HCT116 (cell line): ENCODE measurements at regions of chr12 and their contacts with region 1.

Region 1: DNA sequence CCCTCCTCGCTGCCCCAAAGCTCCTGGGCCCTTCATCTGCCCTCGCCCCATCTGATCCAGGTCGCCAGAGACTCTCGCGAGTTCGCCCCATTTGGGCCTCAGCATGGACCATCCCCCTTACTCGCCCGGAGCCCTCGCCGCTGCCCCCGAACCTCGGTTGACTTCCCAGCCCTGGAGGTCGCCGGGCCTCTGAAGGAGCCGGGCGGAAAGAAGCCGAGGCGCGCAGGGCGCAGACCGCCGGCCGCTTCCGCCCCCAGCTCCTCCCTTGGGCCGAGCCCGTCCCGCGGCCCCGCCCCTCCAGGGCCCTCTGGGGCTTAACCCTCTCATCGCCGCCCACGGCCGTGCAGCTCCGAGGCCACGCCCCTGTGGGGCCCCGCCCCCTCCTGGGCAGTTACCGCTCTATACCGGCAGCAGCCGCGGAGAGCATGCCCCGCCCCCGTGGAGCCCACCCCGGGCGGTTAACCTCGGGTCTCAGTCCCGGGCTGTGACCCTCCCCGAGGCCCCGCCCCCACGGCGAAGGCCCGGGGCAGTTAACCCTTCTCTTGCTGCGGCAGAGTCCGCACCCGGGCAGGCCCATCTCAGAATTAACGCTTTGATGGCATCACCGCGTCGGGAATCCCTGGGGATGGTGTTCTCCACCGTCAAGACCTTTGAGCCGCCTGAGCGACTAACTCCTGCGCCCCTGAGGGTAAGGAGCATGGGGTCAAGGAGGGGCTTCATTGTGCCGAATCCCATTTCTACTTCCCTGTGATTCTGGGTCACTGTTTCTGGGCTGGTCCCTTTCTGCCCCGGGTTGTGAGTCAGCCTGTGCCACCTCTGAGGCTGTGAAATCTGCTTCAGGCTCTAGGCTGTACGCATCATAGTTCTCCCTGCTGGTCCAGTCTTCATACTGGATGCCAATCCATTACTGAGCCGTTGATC is at the start of gene SPSB2:
- DNase-seq: peak; percentile 89
- ATAC-seq: peak; percentile 79
- H3K4me3 ChIP-seq: peak within 1 kb of the TSS; percentile 73 to 92
- H3K27ac ChIP-seq: peak within 1 kb of the TSS; percentile 96
- H3K4me1 ChIP-seq: peaks cover 23 to 50% of the 10 kb centered on the region in 2 experiments
- H3K27me3 ChIP-seq: no peaks in the 10 kb centered on the region
- CTCF ChIP-seq: no peak
- POLR2A ChIP-seq: peak; percentile 35
- RAD21 ChIP-seq: no peak
- total RNA-seq, gene SPSB2: 10.0 TPM

Region 2: GRCh38 chr12:6768990-6769389 is 104.4 kb before region 1 on chr12:
- CTCF ChIA-PET with region 1: no interaction called
- POLR2A ChIA-PET with region 1: no interaction called
- RAD21 ChIA-PET with region 1: no interaction called
- intact Hi-C with region 1: no loop called
- DNase-seq: no peak
- ATAC-seq: no peak
- H3K4me3 ChIP-seq: 0 out of 4 replicates have a peak overlapping the region, but pooled peaks of 1 of the 2 experiments have one; percentile 85
- H3K27ac ChIP-seq: peak overlapping the region; percentile 72; the same call in 1 of the 2 replicates
- H3K4me1 ChIP-seq: peaks cover 32 to 61% of the 10 kb centered on the region in 2 experiments
- H3K27me3 ChIP-seq: no peaks in the 10 kb centered on the region
- CTCF ChIP-seq: no peak
- POLR2A ChIP-seq: no peak
- RAD21 ChIP-seq: no peak

Region 3: DNA sequence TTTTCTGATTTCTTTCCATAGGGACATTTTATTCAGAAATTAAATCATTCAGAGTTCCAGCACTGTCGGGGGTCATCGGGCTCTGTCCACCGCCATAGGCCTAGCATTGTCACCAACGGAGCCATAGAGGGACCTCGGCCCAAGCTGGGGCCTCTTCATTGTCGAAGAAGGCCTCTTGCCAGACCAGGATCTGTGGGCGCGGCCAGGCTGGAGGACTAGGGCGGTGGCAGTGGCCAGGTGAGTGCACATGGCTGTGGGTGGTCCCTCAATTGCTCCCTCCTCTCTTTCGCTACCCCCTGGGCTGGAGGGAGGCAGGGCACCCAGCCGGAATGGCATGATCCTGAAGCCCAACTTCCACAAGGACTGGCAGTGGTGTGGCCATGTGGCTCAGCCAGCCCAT is 10.3 kb after region 1 on chr12:
- CTCF ChIA-PET with region 1: interaction called, 16 read pairs
- POLR2A ChIA-PET with region 1: interaction called, 11 read pairs
- RAD21 ChIA-PET with region 1: no interaction called
- intact Hi-C with region 1: no loop called
- DNase-seq: no peak
- ATAC-seq: no peak
- H3K4me3 ChIP-seq: no peak overlapping the region
- H3K27ac ChIP-seq: no peak overlapping the region
- H3K4me1 ChIP-seq: peaks cover 12 to 22% of the 10 kb centered on the region in 2 experiments
- H3K27me3 ChIP-seq: no peaks in the 10 kb centered on the region
- CTCF ChIP-seq: no peak
- POLR2A ChIP-seq: no peak
- RAD21 ChIP-seq: no peak

Region 4: GRCh38 chr12:6890789-6891645 is 17.7 kb after region 1 on chr12:
- CTCF ChIA-PET with region 1: interaction called, 30 read pairs
- POLR2A ChIA-PET with region 1: interaction called, 10 read pairs
- RAD21 ChIA-PET with region 1: interaction called, 3 to 4 read pairs
- intact Hi-C with region 1: loop called (anchors 1 kb)
- DNase-seq: peak; percentile 86
- ATAC-seq: peak; percentile 97
- H3K4me3 ChIP-seq: peak overlapping the region; percentile 34 to 52
- H3K27ac ChIP-seq: peak overlapping the region; percentile 87
- H3K4me1 ChIP-seq: peaks cover 12 to 18% of the 10 kb centered on the region in 2 experiments
- H3K27me3 ChIP-seq: no peaks in the 10 kb centered on the region
- CTCF ChIP-seq: peak; percentile 70 to 82 (median 77)
- POLR2A ChIP-seq: peak; percentile 96
- RAD21 ChIP-seq: peak; percentile 72

Region 5: DNA sequence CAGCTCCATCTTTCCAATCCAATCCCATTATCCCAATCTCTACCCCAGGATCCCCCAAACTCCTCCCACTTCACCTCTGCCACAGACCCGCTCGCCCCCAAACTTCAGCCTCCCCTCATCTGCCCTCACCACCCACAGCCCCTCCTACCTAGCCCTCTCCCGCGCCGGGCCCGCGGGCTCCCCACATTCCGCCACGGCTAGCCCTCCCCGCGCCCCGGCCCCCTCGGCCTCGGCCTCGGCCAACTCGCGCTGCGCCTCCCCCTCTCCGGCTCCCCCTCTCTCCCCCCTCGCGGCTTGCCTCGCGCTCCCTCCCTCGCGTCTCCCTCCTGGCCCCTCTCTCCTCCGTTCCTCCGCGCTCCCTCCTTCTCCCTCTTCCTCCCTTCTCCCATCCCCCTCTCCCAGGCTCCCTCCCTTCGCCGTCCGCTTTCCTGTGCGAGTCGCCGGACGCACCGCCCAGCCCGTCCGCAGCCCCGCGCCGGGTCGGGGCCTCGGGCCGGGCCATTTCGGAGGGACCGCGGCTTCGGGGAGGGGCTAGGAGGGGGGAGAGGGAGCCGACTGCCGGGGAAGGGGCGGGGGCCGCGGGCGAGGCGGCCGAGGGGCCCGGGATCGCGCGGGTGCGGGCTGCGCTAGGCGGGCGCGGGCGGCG is 54.1 kb after region 1 on chr12 and contains the start of gene ATN1:
- CTCF ChIA-PET with region 1: interaction called, 30 read pairs
- POLR2A ChIA-PET with region 1: interaction called, 23 read pairs
- RAD21 ChIA-PET with region 1: interaction called in 1 of 2 experiments, 3 read pairs
- intact Hi-C with region 1: loop called (anchors 5 kb)
- DNase-seq: no peak
- ATAC-seq: peak; percentile 10
- H3K4me3 ChIP-seq: peak within 1 kb of the TSS; percentile 79 to 92
- H3K27ac ChIP-seq: peak within 1 kb of the TSS; percentile 99
- H3K4me1 ChIP-seq: peaks cover 25 to 53% of the 10 kb centered on the region in 2 experiments
- H3K27me3 ChIP-seq: no peaks in the 10 kb centered on the region
- CTCF ChIP-seq: no peak
- POLR2A ChIP-seq: no peak
- RAD21 ChIP-seq: no peak
- total RNA-seq, gene ATN1: 104 TPM

Region 6: GRCh38 chr12:6937481-6938297 is 64.3 kb after region 1 on chr12:
- CTCF ChIA-PET with region 1: interaction called, 21 read pairs
- POLR2A ChIA-PET with region 1: interaction called, 106 read pairs
- RAD21 ChIA-PET with region 1: no interaction called
- intact Hi-C with region 1: no loop called
- DNase-seq: peak; percentile 92
- ATAC-seq: peak; percentile 91
- H3K4me3 ChIP-seq: peak overlapping the region; percentile 61 to 68
- H3K27ac ChIP-seq: peak overlapping the region; percentile 93
- H3K4me1 ChIP-seq: peaks cover 7 to 36% of the 10 kb centered on the region in 2 experiments; a peak in 3 of 4 replicates
- H3K27me3 ChIP-seq: no peaks in the 10 kb centered on the region
- CTCF ChIP-seq: peak in 2 of 3 experiments; percentile 91 to 98; a peak in 4 of 6 replicates
- POLR2A ChIP-seq: peak; percentile 75
- RAD21 ChIP-seq: no peak

Region 7: GRCh38 chr12:7108796-7109571 is 235.6 kb after region 1 on chr12 and contains the start of gene C1RL:
- CTCF ChIA-PET with region 1: interaction called, 13 read pairs
- POLR2A ChIA-PET with region 1: interaction called, 3 read pairs
- RAD21 ChIA-PET with region 1: no interaction called
- intact Hi-C with region 1: loop called (anchors 1 kb)
- DNase-seq: peak; percentile 50
- ATAC-seq: peak; percentile 69
- H3K4me3 ChIP-seq: peak within 1 kb of the TSS; percentile 85 to 86
- H3K27ac ChIP-seq: peak within 1 kb of the TSS; percentile 88
- H3K4me1 ChIP-seq: peaks cover 4 to 16% of the 10 kb centered on the region in 2 experiments; a peak in 3 of 4 replicates
- H3K27me3 ChIP-seq: no peaks in the 10 kb centered on the region
- CTCF ChIP-seq: peak; percentile 69 to 96 (median 95); a peak in 5 of 6 replicates
- POLR2A ChIP-seq: no peak
- RAD21 ChIP-seq: peak; percentile 71
- total RNA-seq, gene C1RL: 25.9 TPM